CD8-positive, alpha-beta T cell (primary cell): ENCODE measurements at regions of chr7 and their contacts with region 1.

Region 1: GRCh38 chr7:143416565-143417149 is 8.0 kb upstream of the EPHA1 start:
- DNase-seq: peak in 4 of 9 experiments; percentile 23 to 72 (median 47)
- ATAC-seq: peak; percentile 69
- H3K4me3 ChIP-seq: no peak overlapping the region
- H3K4me3 Mint-ChIP-seq: no peak overlapping the region
- H3K27ac ChIP-seq: no peak overlapping the region
- H3K27ac Mint-ChIP-seq: no peak overlapping the region
- H3K4me1 ChIP-seq: peaks cover 3% of the 10 kb centered on the region
- H3K4me1 Mint-ChIP-seq: peaks cover 16% of the 10 kb centered on the region
- H3K27me3 ChIP-seq: no peaks in the 10 kb centered on the region
- H3K27me3 Mint-ChIP-seq: peaks cover 2% of the 10 kb centered on the region
- CTCF ChIP-seq: peak; percentile 80

Region 2: GRCh38 chr7:143263266-143264195 is 153.1 kb before region 1 on chr7 and contains the start of gene GSTK1:
- CTCF ChIA-PET with region 1: interaction called, 13 read pairs
- POLR2A ChIA-PET with region 1: no interaction called
- intact Hi-C with region 1: no loop called
- DNase-seq: peak; percentile 34 to 86 (median 79)
- ATAC-seq: peak; percentile 95
- H3K4me3 ChIP-seq: peak within 1 kb of the TSS; percentile 90 to 98
- H3K4me3 Mint-ChIP-seq: peak within 1 kb of the TSS; percentile 96
- H3K27ac ChIP-seq: peak within 1 kb of the TSS; percentile 70 to 80
- H3K27ac Mint-ChIP-seq: peak within 1 kb of the TSS; percentile 97
- H3K4me1 ChIP-seq: peaks cover 34% of the 10 kb centered on the region
- H3K4me1 Mint-ChIP-seq: peaks cover 63% of the 10 kb centered on the region
- H3K27me3 ChIP-seq: no peaks in the 10 kb centered on the region
- H3K27me3 Mint-ChIP-seq: no peaks in the 10 kb centered on the region
- CTCF ChIP-seq: no peak
- total RNA-seq, gene GSTK1: 200 to 208 TPM

Region 3: GRCh38 chr7:143305423-143306070 is 111.1 kb before region 1 on chr7:
- CTCF ChIA-PET with region 1: interaction called, 15 read pairs
- POLR2A ChIA-PET with region 1: no interaction called
- intact Hi-C with region 1: loop called in 1 of 2 experiments (anchors 5 kb)
- DNase-seq: peak; percentile 38 to 78 (median 71)
- ATAC-seq: peak; percentile 77
- H3K4me3 ChIP-seq: no peak overlapping the region
- H3K4me3 Mint-ChIP-seq: no peak overlapping the region
- H3K27ac ChIP-seq: no peak overlapping the region
- H3K27ac Mint-ChIP-seq: peak overlapping the region; percentile 39
- H3K4me1 ChIP-seq: peaks cover 3% of the 10 kb centered on the region
- H3K4me1 Mint-ChIP-seq: peaks cover 22% of the 10 kb centered on the region
- H3K27me3 ChIP-seq: no peaks in the 10 kb centered on the region
- H3K27me3 Mint-ChIP-seq: no peaks in the 10 kb centered on the region
- CTCF ChIP-seq: peak; percentile 58

Region 4: DNA sequence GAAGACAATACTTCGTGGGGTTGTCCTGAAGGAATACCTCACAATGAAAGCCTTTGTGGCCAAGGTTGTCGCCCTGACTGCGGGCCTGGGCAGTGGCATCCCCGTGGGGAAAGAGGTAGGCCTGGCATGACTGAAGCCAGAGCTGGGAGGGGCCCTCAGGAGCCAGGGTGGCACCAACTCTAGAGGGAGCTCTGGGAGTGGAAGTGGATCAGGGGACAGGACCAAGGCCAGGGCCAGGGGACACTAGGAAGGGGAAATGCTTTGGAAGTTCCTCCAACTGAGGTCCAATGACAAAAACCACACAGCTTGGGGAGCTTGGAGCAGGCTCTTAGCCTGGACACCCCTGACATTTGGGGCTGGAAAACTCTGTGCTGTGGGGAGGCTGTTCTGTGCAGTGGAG is 94.9 kb before region 1 on chr7:
- CTCF ChIA-PET with region 1: interaction called, 4 read pairs
- POLR2A ChIA-PET with region 1: no interaction called
- intact Hi-C with region 1: loop called in 1 of 2 experiments (anchors 5 kb)
- DNase-seq: peak in 1 of 9 experiments; percentile 13
- ATAC-seq: no peak
- H3K4me3 ChIP-seq: no peak overlapping the region
- H3K4me3 Mint-ChIP-seq: no peak overlapping the region
- H3K27ac ChIP-seq: no peak overlapping the region
- H3K27ac Mint-ChIP-seq: no peak overlapping the region
- H3K4me1 ChIP-seq: no peaks in the 10 kb centered on the region
- H3K4me1 Mint-ChIP-seq: peaks cover 10% of the 10 kb centered on the region
- H3K27me3 ChIP-seq: no peaks in the 10 kb centered on the region
- H3K27me3 Mint-ChIP-seq: no peaks in the 10 kb centered on the region
- CTCF ChIP-seq: no peak

Region 5: GRCh38 chr7:143372070-143372469 is 44.6 kb before region 1 on chr7:
- CTCF ChIA-PET with region 1: interaction called, 18 read pairs
- POLR2A ChIA-PET with region 1: no interaction called
- intact Hi-C with region 1: no loop called
- DNase-seq: peak; percentile 36 to 81 (median 71)
- ATAC-seq: peak; percentile 33
- H3K4me3 ChIP-seq: no peak overlapping the region
- H3K4me3 Mint-ChIP-seq: peak overlapping the region; percentile 24
- H3K27ac ChIP-seq: peak overlapping the region in 1 of 2 experiments; percentile 36
- H3K27ac Mint-ChIP-seq: peak overlapping the region; percentile 75
- H3K4me1 ChIP-seq: peaks cover 58% of the 10 kb centered on the region
- H3K4me1 Mint-ChIP-seq: peaks cover 55% of the 10 kb centered on the region
- H3K27me3 ChIP-seq: no peaks in the 10 kb centered on the region
- H3K27me3 Mint-ChIP-seq: no peaks in the 10 kb centered on the region
- CTCF ChIP-seq: peak; percentile 18